BJ (cell line): ENCODE measurements at regions of chr2 and their contacts with region 1.

Region 1: GRCh38 chr2:119218478-119219064 is 5.1 kb upstream of the STEAP3 start:
- DNase-seq: no peak
- H3K4me3 ChIP-seq: no peak overlapping the region
- H3K27me3 ChIP-seq: no peaks in the 10 kb centered on the region
- CTCF ChIP-seq: peak; percentile 71

Region 2: GRCh38 chr2:118989481-118989880 is 229.1 kb before region 1 on chr2:
- CTCF ChIA-PET with region 1: no interaction called
- POLR2A ChIA-PET with region 1: no interaction called
- DNase-seq: no peak
- H3K4me3 ChIP-seq: no peak overlapping the region
- H3K27me3 ChIP-seq: no peaks in the 10 kb centered on the region
- CTCF ChIP-seq: no peak

Region 3: GRCh38 chr2:119142824-119143223 is 75.7 kb before region 1 on chr2:
- CTCF ChIA-PET with region 1: no interaction called
- POLR2A ChIA-PET with region 1: no interaction called
- DNase-seq: no peak
- H3K4me3 ChIP-seq: no peak overlapping the region
- H3K27me3 ChIP-seq: 0 out of 2 replicates have a peak, but pooled peaks cover 1% of the 10 kb centered on the region
- CTCF ChIP-seq: no peak

Region 4: GRCh38 chr2:119234377-119235019 is 15.9 kb after region 1 on chr2:
- CTCF ChIA-PET with region 1: interaction called, 10 read pairs
- POLR2A ChIA-PET with region 1: no interaction called
- DNase-seq: no peak
- H3K4me3 ChIP-seq: no peak overlapping the region
- H3K27me3 ChIP-seq: no peaks in the 10 kb centered on the region; the same call in 1 of the 2 replicates
- CTCF ChIP-seq: peak; percentile 52